ENCODE measurements at regions of chr3 and their contacts with region 1.

Region 1: GRCh38 chr3:32960404-32961170 is 9.1 kb downstream of the CCR4 start:
- DNase-seq: peak in 3 of 14 experiments; percentile 60 to 71 (median 66)
- ATAC-seq: no peak
- H3K4me3 ChIP-seq: no peak overlapping the region
- H3K4me3 Mint-ChIP-seq: peak overlapping the region; percentile 65
- H3K27ac ChIP-seq: no peak overlapping the region
- H3K27ac Mint-ChIP-seq: peak overlapping the region; percentile 80
- H3K4me1 ChIP-seq: peaks cover 30% of the 10 kb centered on the region
- H3K4me1 Mint-ChIP-seq: peaks cover 35% of the 10 kb centered on the region
- H3K27me3 ChIP-seq: no peaks in the 10 kb centered on the region
- H3K27me3 Mint-ChIP-seq: no peaks in the 10 kb centered on the region
- CTCF ChIP-seq: no peak

Region 2: GRCh38 chr3:33006081-33006480 is 45.5 kb after region 1 on chr3:
- CTCF ChIA-PET with region 1: interaction called, 3 read pairs
- POLR2A ChIA-PET with region 1: interaction called, 3 read pairs
- intact Hi-C with region 1: loop called in 1 of 2 experiments (anchors 5 kb)
- DNase-seq: peak in 6 of 14 experiments; percentile 16 to 68 (median 42)
- ATAC-seq: no peak
- H3K4me3 ChIP-seq: no peak overlapping the region
- H3K4me3 Mint-ChIP-seq: no peak overlapping the region
- H3K27ac ChIP-seq: no peak overlapping the region
- H3K27ac Mint-ChIP-seq: peak overlapping the region; percentile 64
- H3K4me1 ChIP-seq: peaks cover 54% of the 10 kb centered on the region
- H3K4me1 Mint-ChIP-seq: peaks cover 45% of the 10 kb centered on the region
- H3K27me3 ChIP-seq: no peaks in the 10 kb centered on the region
- H3K27me3 Mint-ChIP-seq: no peaks in the 10 kb centered on the region
- CTCF ChIP-seq: no peak

Region 3: GRCh38 chr3:34323517-34323916 is 1362.9 kb after region 1 on chr3:
- CTCF ChIA-PET with region 1: no interaction called
- POLR2A ChIA-PET with region 1: no interaction called
- intact Hi-C with region 1: no loop called
- DNase-seq: no peak
- ATAC-seq: no peak
- H3K4me3 ChIP-seq: no peak overlapping the region
- H3K4me3 Mint-ChIP-seq: no peak overlapping the region
- H3K27ac ChIP-seq: no peak overlapping the region
- H3K27ac Mint-ChIP-seq: no peak overlapping the region
- H3K4me1 ChIP-seq: no peaks in the 10 kb centered on the region
- H3K4me1 Mint-ChIP-seq: no peaks in the 10 kb centered on the region
- H3K27me3 ChIP-seq: no peaks in the 10 kb centered on the region
- H3K27me3 Mint-ChIP-seq: no peaks in the 10 kb centered on the region
- CTCF ChIP-seq: no peak